Left colon (tissue), 2 donors: ENCODE measurements at regions of chr1 and their contacts with region 1.

Region 1: GRCh38 chr1:160101037-160101716 is 2.8 kb upstream of the IGSF8 start:
- DNase-seq: peak; percentile 77 to 80
- ATAC-seq: peak; percentile 5

Region 2: DNA sequence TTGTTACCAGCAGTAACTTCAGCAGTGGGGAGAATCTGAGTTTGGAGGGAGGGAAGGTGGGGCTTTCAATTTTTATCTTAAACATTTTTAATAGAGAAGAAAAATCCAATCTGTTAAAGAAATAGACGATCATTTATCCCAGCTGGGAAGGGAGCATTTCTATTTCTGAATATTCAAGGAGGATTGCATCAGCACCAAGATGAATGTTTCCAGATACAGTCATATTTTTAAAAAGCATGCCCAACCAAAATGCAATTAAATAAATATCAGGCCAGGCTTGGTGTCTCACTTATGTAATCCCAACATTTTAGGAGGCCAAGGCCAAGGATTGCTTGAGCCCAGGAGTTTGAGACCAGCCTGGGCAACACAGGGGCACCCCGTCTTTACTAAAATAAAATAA is 48.5 kb after region 1 on chr1:
- intact Hi-C with region 1: no loop called
- DNase-seq: no peak
- ATAC-seq: no peak

Region 3: GRCh38 chr1:160219062-160219929 is 118.1 kb after region 1 on chr1:
- intact Hi-C with region 1: loop called in 1 of 2 experiments (anchors 10 kb)
- DNase-seq: peak; percentile 28 to 49
- ATAC-seq: peak; percentile 57

Region 4: DNA sequence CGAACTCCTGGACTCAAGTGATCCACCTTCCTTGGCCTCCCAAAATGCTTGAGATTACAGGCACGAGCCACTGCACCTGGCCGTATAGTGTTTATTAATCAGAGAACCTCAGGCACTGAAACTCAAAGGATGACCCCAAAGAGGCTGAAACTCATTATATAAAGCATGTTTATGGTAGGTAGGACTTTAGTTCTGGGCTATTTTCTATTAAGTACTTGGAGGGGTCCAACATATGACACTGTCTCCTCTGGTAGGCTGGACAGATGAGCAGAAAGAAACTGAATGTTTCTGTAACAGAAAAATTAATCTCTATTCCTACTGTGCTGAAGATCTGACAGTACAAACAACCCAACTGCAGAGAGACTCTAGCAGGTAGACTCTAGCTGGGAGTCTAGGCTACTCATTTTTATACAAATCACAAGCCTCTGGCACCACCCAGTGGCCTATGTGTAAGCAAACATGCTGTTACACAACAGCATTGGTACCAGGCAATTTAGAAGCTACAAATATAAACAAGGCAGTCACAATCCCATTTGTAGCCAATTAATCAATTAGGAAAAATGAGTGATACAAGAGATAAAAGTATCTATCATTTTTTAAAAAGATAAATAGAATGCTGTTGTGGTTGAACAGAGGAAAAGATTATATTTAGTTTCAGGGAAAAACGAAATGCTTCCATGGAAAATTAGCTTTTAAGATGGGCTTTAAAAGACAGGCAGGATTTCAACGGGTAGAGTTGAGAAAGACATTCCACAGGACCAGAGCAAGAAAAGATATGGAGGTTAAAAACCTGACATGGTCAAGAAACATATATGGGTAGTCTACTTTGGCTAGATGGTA is 150.7 kb after region 1 on chr1:
- intact Hi-C with region 1: loop called in 1 of 2 experiments (anchors 10 kb)
- DNase-seq: peak; percentile 48 to 66
- ATAC-seq: peak; percentile 99